Sciatic nerve (tissue), 2 donors: ENCODE measurements at regions of chr1 and their contacts with region 1.

Region 1: DNA sequence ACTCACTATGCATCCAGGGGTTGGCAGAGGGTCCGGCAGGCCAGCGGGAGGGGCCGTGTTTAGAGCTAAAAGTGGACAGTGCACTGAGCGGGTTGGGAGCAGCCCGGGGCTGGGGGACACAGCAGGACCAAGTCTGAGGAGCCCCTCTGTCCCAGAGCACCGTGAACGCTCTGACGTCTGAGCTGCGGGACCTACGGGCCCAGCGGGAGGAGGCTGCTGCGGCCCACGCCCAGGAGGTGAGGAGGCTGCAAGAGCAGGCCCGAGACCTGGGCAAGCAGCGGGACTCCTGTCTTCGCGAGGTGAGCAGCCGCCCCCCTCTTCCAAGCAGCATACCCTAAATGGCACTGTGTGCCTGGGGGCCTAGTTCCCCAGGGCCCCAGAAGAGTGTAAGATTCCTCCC is 25.8 kb downstream of the MFAP2 start:
- DNase-seq: no peak
- ATAC-seq: no peak

Region 2: DNA sequence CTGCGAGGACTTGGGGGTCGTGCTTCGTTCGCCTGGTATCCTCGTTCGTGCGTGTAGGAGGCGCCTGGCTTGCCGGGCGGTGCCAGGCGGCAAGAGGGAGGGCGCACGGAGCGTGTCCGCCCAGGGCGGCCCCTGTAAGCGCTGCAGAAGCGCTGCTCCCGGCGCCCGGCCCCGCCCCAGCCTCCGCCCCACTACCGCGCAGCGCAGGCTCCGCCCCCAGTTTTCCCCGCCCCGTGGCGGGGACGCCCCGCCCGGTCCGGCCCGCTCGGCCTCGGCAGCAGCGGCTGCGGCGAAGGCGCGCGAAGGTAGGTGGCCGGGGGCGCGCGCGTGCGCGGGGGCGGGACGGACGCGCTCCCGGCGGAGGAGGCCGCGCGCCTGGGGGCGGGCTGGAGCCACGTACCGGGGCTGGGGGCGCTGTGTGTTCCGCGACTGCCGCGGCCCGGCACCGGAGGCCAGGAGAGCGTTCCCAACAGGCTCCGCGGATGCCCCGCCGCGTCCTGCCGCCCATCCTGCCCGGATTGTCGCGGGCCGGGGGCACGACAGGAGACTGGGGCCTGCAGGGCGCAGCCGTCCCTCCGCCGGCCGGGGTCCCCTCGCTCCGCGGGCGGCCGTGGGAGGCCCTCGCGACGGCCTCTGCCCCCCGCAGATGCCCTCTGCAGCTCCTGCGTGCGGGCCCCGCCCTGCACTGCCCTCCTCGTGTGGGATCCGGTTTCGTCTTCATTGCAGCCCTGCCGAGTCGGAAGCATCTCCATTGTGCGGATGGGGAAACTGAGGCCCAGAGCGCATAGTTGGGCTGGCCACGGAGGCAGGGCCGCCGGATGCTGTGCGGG is 40.5 kb before region 1 on chr1:
- intact Hi-C with region 1: no loop called
- DNase-seq: peak; percentile 94
- ATAC-seq: peak; percentile 97

Region 3: GRCh38 chr1:17045634-17046333 is 91.2 kb after region 1 on chr1:
- intact Hi-C with region 1: loop called (anchors 5 kb)
- DNase-seq: no peak
- ATAC-seq: peak; percentile 82